WTC11 (cell line): ENCODE measurements at regions of chr6 and their contacts with region 1.

Region 1: GRCh38 chr6:143940011-143940597 is 68.0 kb downstream of the PLAGL1 start:
- DNase-seq: peak; percentile 63
- ATAC-seq: peak; percentile 52
- H3K4me3 Mint-ChIP-seq: no peak overlapping the region
- H3K27ac Mint-ChIP-seq: no peak overlapping the region
- H3K4me1 Mint-ChIP-seq: peaks cover 43% of the 10 kb centered on the region
- H3K27me3 Mint-ChIP-seq: peaks cover 15% of the 10 kb centered on the region
- CTCF ChIP-seq: peak; percentile 55

Region 2: GRCh38 chr6:143575440-143575839 is 364.7 kb before region 1 on chr6:
- CTCF ChIA-PET with region 1: interaction called, 45 read pairs
- POLR2A ChIA-PET with region 1: no interaction called
- DNase-seq: peak; percentile 32
- ATAC-seq: peak; percentile 81
- H3K4me3 Mint-ChIP-seq: no peak overlapping the region
- H3K27ac Mint-ChIP-seq: no peak overlapping the region
- H3K4me1 Mint-ChIP-seq: peaks cover 20% of the 10 kb centered on the region
- H3K27me3 Mint-ChIP-seq: no peaks in the 10 kb centered on the region; the same call in 1 of the 2 replicates
- CTCF ChIP-seq: peak; percentile 71

Region 3: GRCh38 chr6:143961886-143962873 is 22.1 kb after region 1 on chr6:
- CTCF ChIA-PET with region 1: interaction called, 87 read pairs
- POLR2A ChIA-PET with region 1: no interaction called
- DNase-seq: no peak
- ATAC-seq: no peak
- H3K4me3 Mint-ChIP-seq: peak overlapping the region; percentile 14
- H3K27ac Mint-ChIP-seq: no peak overlapping the region
- H3K4me1 Mint-ChIP-seq: peaks cover 88% of the 10 kb centered on the region
- H3K27me3 Mint-ChIP-seq: no peaks in the 10 kb centered on the region
- CTCF ChIP-seq: no peak

Region 4: DNA sequence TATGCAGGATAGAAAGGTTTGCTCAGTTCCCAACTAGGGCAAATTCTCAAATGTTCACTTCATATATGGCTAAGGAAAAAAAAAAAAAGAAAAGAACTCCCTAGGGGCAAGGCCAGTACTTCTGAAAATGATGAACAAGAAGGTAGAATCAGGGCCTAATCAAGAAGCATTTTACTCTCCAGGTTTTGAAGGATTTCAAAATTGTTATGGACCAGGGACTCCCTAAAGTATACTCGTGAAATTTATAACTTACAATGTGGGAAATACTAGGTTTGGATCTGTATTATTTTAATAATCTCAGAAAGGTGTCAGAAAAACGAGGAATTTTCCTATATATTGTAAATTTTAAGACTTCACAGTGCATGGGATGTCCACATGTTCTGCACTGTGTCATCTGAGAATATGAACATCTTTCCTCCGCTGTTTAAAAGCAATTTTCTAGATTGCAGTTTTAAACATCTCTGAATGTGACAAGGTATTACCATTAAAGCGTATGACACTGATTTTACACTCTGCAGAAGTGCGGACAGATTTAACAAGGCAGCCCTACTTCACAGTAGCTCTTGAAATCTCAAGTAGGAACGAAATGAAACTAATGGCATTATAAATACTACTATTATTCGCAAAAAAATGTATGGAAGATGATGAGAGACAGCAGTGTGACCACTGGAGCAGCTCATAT is 54.0 kb after region 1 on chr6:
- CTCF ChIA-PET with region 1: interaction called, 12 read pairs
- POLR2A ChIA-PET with region 1: no interaction called
- DNase-seq: no peak
- ATAC-seq: no peak
- H3K4me3 Mint-ChIP-seq: no peak overlapping the region
- H3K27ac Mint-ChIP-seq: no peak overlapping the region
- H3K4me1 Mint-ChIP-seq: peaks cover 6% of the 10 kb centered on the region; the same call in 1 of the 2 replicates
- H3K27me3 Mint-ChIP-seq: peaks cover 72% of the 10 kb centered on the region
- CTCF ChIP-seq: no peak

Region 5: GRCh38 chr6:144013486-144013909 is 73.4 kb after region 1 on chr6:
- CTCF ChIA-PET with region 1: interaction called, 57 read pairs
- POLR2A ChIA-PET with region 1: no interaction called
- DNase-seq: peak; percentile 79
- ATAC-seq: peak; percentile 63
- H3K4me3 Mint-ChIP-seq: no peak overlapping the region
- H3K27ac Mint-ChIP-seq: no peak overlapping the region
- H3K4me1 Mint-ChIP-seq: no peaks in the 10 kb centered on the region
- H3K27me3 Mint-ChIP-seq: peaks cover 50% of the 10 kb centered on the region
- CTCF ChIP-seq: peak; percentile 81

Region 6: DNA sequence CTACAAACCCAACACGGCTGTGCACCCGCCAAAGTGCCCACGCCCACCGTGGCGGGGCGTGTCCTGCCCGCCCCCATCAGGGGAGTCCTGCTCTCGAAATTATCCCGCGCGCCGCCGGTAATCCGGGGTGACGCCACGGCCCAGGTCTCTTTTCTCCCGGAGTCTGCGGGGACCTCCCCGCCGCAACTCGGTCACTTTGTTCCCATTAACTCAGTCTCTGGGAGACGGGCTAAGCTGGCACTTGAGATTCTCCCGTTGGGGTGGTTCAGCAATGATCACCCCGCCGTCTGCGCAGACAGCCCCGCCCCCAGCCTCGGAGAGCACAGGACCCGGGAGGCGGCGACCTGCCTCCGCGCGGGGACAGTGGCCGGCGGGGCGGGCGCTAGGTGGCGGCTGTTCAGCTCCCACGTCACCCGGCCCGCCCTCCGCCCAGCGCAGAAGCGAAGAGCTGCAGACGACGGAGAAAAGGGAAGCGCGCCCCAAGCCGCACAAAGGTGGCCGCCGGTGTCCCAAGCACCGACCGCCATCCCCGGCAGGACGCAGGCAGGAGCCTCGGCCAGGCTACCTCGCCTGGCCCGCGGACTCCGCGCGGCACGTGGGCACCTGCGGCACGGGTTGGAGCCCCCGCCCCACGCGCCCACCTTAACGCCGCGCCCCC is 123.8 kb after region 1 on chr6:
- CTCF ChIA-PET with region 1: interaction called, 21 read pairs
- POLR2A ChIA-PET with region 1: no interaction called
- DNase-seq: peak; percentile 78
- ATAC-seq: peak; percentile 86
- H3K4me3 Mint-ChIP-seq: peak overlapping the region; percentile 82
- H3K27ac Mint-ChIP-seq: no peak overlapping the region
- H3K4me1 Mint-ChIP-seq: peaks cover 38% of the 10 kb centered on the region
- H3K27me3 Mint-ChIP-seq: peaks cover 87% of the 10 kb centered on the region
- CTCF ChIP-seq: no peak